B cell (primary cell): ENCODE measurements at regions of chr2 and their contacts with region 1.

Region 1: DNA sequence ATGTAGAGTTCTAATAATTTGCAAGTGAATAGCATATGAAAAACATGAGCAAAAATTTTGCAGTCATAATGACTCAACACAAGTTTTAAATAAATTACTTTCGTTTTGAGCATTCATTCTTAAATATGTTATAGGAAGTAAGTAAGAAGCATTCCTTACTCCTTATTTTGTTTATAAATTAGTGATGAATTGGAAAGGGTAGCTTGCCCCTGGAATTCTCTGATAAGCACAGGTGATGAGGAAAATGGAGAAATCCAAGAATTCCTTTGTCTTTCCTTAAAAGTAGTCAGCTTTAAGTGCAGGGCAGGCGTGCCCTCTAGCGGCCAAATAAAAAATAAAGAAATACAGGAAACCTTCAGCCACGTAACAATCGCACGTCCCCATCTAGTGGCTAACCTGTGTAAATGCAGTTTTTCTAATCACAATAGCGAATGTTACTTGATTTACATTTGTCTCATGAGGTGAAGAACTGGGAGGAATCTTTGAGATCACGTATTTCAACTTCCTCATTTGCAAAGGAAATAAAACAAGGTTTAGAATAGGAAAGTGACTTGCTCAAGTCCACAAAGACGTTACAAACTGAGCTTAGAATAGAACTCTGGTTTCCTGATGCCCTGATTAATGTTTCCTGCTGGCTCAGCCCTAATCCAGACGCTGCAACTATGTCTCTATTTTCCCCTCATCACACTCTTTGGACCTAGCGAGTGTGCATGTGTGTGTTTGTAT is 47.2 kb upstream of the ZNG1B start:
- DNase-seq: peak; percentile 89
- ATAC-seq: peak; percentile 97
- H3K4me3 ChIP-seq: peak overlapping the region; percentile 15 to 59 (median 42)
- H3K4me3 Mint-ChIP-seq: peak overlapping the region; percentile 86
- H3K27ac ChIP-seq: peak overlapping the region; percentile 80 to 87
- H3K27ac Mint-ChIP-seq: peak overlapping the region; percentile 97
- H3K4me1 ChIP-seq: peaks cover 8% of the 10 kb centered on the region in 2 donors
- H3K4me1 Mint-ChIP-seq: peaks cover 14% of the 10 kb centered on the region
- H3K27me3 ChIP-seq: no peaks in the 10 kb centered on the region
- H3K27me3 Mint-ChIP-seq: no peaks in the 10 kb centered on the region
- CTCF ChIP-seq: peak; percentile 100

Region 2: DNA sequence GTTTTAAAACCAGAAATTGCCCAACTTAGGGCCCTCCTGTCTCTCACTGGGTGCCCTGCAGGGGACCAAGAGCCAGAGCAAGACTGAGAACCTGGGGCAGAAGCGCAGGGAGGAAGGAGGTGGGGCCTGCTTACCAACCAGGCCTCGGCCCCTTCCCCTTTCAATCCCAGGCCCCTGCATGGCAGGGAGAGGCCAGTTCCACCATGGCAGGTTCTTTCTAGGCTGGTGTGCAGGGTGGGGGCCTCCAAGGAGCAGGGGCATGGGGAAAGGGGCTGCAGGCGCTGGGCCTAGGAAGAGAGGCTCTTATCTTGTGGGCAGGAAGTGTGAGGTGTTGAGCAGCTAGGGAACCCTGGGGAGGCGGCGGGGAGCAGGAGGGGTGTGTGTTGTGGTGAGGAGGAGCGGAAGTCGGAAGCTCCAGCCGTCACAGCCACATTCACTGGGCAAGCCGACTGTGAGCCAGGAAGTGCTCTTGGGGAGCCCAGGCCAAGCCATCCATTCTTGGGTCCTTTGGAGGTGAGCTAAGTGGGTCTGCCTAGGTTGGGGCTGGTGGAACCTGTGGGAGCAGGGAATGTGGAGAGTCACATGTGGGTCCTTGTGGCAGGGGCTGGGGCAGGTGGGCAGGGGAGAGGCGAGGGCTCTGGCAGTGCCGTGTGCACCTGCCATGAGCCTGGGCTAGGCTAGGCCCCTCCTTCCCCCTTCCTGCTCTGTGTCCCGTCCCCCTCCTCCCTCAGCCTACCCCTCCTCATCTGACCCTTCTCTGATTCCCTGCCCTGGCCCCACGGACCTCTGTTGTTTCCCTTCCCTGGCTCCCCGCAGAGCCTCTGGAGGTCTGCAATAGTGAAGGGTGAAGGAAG is 216.5 kb before region 1 on chr2 and contains the start of gene PSD4:
- CTCF ChIA-PET with region 1: interaction called, 17 read pairs
- POLR2A ChIA-PET with region 1: no interaction called
- intact Hi-C with region 1: no loop called
- DNase-seq: peak; percentile 83
- ATAC-seq: peak; percentile 73
- H3K4me3 ChIP-seq: peak within 1 kb of the TSS; percentile 58 to 95 (median 77)
- H3K4me3 Mint-ChIP-seq: peak within 1 kb of the TSS; percentile 91
- H3K27ac ChIP-seq: peak within 1 kb of the TSS; percentile 87 to 91
- H3K27ac Mint-ChIP-seq: peak within 1 kb of the TSS; percentile 92
- H3K4me1 ChIP-seq: peaks cover 69 to 90% of the 10 kb centered on the region in 2 donors
- H3K4me1 Mint-ChIP-seq: peaks cover 86% of the 10 kb centered on the region
- H3K27me3 ChIP-seq: no peaks in the 10 kb centered on the region
- H3K27me3 Mint-ChIP-seq: no peaks in the 10 kb centered on the region
- CTCF ChIP-seq: no peak
- total RNA-seq, gene PSD4: 203 and 217 TPM in 2 replicates

Region 3: DNA sequence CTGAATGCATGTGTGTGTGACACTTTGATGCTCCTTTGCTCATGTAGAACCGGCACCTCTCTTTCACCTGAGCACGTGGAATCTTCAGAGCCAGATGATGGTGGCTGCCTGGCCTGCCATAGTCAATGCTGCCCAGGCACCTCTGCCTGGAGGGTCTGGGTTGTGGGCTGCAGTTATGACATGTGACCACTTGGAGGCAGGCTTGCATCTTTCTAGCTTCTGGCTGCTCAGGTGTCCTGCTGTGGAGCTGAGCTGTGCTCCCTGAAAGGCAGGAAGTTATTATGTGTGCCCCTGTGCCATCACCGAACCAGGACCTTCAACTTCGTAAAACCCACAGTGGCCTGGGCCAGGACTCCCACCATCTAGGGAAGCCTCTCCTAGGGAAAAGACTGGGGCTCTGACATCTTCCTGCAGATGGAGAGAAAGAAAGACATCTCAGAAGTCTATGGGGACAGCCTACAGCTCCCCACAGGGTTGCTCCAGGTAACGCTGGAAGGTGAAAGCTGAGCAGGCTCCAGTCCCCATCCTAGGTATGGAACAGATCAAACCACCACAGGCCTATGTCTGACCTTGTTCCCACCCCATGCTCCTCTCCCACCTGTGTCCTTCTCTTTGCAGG is 186.3 kb before region 1 on chr2:
- CTCF ChIA-PET with region 1: interaction called, 31 read pairs
- POLR2A ChIA-PET with region 1: no interaction called
- intact Hi-C with region 1: loop called (anchors 2 kb)
- DNase-seq: peak; percentile 82
- ATAC-seq: peak; percentile 78
- H3K4me3 ChIP-seq: no peak overlapping the region
- H3K4me3 Mint-ChIP-seq: no peak overlapping the region
- H3K27ac ChIP-seq: peak overlapping the region; percentile 42 to 53
- H3K27ac Mint-ChIP-seq: peak overlapping the region; percentile 90
- H3K4me1 ChIP-seq: peaks cover 10 to 16% of the 10 kb centered on the region in 2 donors
- H3K4me1 Mint-ChIP-seq: peaks cover 24% of the 10 kb centered on the region
- H3K27me3 ChIP-seq: no peaks in the 10 kb centered on the region
- H3K27me3 Mint-ChIP-seq: no peaks in the 10 kb centered on the region
- CTCF ChIP-seq: peak; percentile 80

Region 4: DNA sequence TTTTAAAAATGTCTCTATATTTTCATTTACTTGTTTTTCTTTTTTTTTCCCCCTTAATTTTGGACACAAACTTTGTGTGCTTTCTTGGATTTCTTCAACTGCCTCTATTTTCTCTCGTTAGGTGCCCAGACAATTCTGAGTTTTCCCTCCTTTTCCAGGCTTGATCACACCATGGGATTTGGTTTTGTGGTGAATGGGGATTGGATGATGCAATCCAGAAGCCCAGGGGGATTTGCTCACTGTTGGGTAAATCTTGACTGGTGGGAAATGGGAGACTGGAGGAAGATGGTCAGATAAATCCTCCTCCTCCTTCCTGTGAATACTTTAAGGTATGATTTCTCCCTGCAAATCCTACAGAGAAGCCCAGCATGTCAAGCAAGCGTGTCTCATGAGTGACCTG is 92.1 kb before region 1 on chr2:
- CTCF ChIA-PET with region 1: interaction called, 13 read pairs
- POLR2A ChIA-PET with region 1: no interaction called
- intact Hi-C with region 1: no loop called
- DNase-seq: no peak
- ATAC-seq: no peak
- H3K4me3 ChIP-seq: no peak overlapping the region
- H3K4me3 Mint-ChIP-seq: no peak overlapping the region
- H3K27ac ChIP-seq: no peak overlapping the region
- H3K27ac Mint-ChIP-seq: no peak overlapping the region
- H3K4me1 ChIP-seq: no peaks in the 10 kb centered on the region
- H3K4me1 Mint-ChIP-seq: no peaks in the 10 kb centered on the region
- H3K27me3 ChIP-seq: peaks cover 0 to 5% (median 2%) of the 10 kb centered on the region in 4 experiments
- H3K27me3 Mint-ChIP-seq: peaks cover 9% of the 10 kb centered on the region
- CTCF ChIP-seq: no peak

Region 5: GRCh38 chr2:113376913-113377445 is 13.3 kb before region 1 on chr2:
- CTCF ChIA-PET with region 1: interaction called, 17 read pairs
- POLR2A ChIA-PET with region 1: no interaction called
- intact Hi-C with region 1: no loop called
- DNase-seq: peak; percentile 80
- ATAC-seq: peak; percentile 91
- H3K4me3 ChIP-seq: no peak overlapping the region
- H3K4me3 Mint-ChIP-seq: peak overlapping the region; percentile 38
- H3K27ac ChIP-seq: peak overlapping the region in 1 of 2 donors; percentile 44
- H3K27ac Mint-ChIP-seq: peak overlapping the region; percentile 77
- H3K4me1 ChIP-seq: peaks cover 9 to 14% of the 10 kb centered on the region in 2 donors
- H3K4me1 Mint-ChIP-seq: peaks cover 33% of the 10 kb centered on the region
- H3K27me3 ChIP-seq: no peaks in the 10 kb centered on the region
- H3K27me3 Mint-ChIP-seq: no peaks in the 10 kb centered on the region
- CTCF ChIP-seq: no peak